ENCODE measurements at regions of chr2 and their contacts with region 1.

Region 1: GRCh38 chr2:121205321-121205942 is 79.6 kb downstream of the TFCP2L1 start:
- DNase-seq: peak; percentile 84
- H3K4me3 Mint-ChIP-seq: no peak overlapping the region
- H3K27ac Mint-ChIP-seq: peak overlapping the region; percentile 47
- H3K4me1 Mint-ChIP-seq: peaks cover 49% of the 10 kb centered on the region
- H3K27me3 Mint-ChIP-seq: no peaks in the 10 kb centered on the region
- CTCF ChIP-seq: no peak

Region 2: GRCh38 chr2:120729406-120730399 is 475.7 kb before region 1 on chr2:
- CTCF ChIA-PET with region 1: no interaction called
- intact Hi-C with region 1: no loop called
- DNase-seq: peak; percentile 39
- H3K4me3 Mint-ChIP-seq: no peak overlapping the region
- H3K27ac Mint-ChIP-seq: no peak overlapping the region
- H3K4me1 Mint-ChIP-seq: peaks cover 11% of the 10 kb centered on the region
- H3K27me3 Mint-ChIP-seq: peaks cover 24% of the 10 kb centered on the region
- CTCF ChIP-seq: no peak

Region 3: DNA sequence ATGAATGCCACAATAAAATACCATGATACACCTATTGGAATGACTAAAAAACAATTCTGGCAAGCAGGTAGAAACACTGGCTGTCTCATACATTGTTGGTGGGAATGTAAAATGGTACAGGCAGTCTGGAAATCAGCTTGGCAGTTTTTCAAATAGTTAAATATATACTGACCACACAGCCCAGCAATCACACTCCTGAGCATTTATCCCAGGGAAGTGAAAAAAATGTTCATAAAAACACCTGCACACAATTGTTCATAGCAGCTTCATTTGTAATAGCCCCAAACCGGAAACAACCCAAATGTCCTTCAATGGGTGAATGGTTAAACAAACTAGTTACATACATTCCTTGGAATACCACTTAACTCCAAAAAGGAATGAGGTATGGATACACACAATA is 57.7 kb before region 1 on chr2:
- CTCF ChIA-PET with region 1: no interaction called
- intact Hi-C with region 1: loop called (anchors 10 kb)
- DNase-seq: no peak
- H3K4me3 Mint-ChIP-seq: no peak overlapping the region
- H3K27ac Mint-ChIP-seq: no peak overlapping the region
- H3K4me1 Mint-ChIP-seq: peaks cover 16% of the 10 kb centered on the region
- H3K27me3 Mint-ChIP-seq: no peaks in the 10 kb centered on the region
- CTCF ChIP-seq: no peak